ENCODE measurements at regions of chr9 and their contacts with region 1.

Region 1: GRCh38 chr9:70352802-70353201 is 61.7 kb downstream of the KLF9 start:
- DNase-seq: no peak

Region 2: DNA sequence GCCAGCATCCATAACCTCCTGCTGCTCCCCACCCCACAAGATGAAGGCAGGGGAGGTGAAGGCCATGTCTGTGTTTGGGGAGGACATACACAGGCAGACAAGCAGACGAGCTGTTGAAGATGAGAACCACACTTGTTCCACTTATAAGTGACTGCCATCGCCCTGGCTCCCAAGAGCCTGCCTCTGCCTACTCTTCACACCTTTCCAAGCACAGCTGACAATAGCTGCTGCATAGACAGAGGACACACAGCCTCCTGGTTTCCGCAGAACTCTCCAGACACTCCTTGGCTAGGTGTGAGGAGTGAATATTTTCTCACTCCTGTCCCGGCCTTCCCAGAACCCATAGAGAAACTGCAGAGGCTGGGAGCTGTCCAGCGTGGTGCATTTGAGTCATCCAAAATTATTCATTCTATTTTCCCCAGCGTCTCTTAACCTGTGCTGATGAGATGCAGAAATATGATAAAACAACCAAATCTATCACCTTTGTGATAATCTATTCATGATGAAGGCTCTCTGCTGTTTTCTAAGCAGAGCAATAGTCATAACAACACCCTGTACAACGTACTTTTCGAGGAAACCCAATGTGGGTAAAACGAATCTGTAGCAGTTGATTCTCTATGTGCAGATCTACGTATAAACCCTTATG is 36.9 kb after region 1 on chr9:
- intact Hi-C with region 1: loop called (anchors 5 kb)
- DNase-seq: no peak

Region 3: GRCh38 chr9:70484210-70485130 is 131.7 kb after region 1 on chr9:
- intact Hi-C with region 1: loop called (anchors 5 kb)
- DNase-seq: no peak

Region 4: GRCh38 chr9:71036501-71036900 is 683.7 kb after region 1 on chr9:
- intact Hi-C with region 1: no loop called
- DNase-seq: no peak

Measured in cardiac septum (tissue), 1 donor.